Activated B cell treated with CpG ODN at 0.5 μM for 24 hours (primary cell): ENCODE measurements at regions of chr19 and their contacts with region 1.

Region 1: DNA sequence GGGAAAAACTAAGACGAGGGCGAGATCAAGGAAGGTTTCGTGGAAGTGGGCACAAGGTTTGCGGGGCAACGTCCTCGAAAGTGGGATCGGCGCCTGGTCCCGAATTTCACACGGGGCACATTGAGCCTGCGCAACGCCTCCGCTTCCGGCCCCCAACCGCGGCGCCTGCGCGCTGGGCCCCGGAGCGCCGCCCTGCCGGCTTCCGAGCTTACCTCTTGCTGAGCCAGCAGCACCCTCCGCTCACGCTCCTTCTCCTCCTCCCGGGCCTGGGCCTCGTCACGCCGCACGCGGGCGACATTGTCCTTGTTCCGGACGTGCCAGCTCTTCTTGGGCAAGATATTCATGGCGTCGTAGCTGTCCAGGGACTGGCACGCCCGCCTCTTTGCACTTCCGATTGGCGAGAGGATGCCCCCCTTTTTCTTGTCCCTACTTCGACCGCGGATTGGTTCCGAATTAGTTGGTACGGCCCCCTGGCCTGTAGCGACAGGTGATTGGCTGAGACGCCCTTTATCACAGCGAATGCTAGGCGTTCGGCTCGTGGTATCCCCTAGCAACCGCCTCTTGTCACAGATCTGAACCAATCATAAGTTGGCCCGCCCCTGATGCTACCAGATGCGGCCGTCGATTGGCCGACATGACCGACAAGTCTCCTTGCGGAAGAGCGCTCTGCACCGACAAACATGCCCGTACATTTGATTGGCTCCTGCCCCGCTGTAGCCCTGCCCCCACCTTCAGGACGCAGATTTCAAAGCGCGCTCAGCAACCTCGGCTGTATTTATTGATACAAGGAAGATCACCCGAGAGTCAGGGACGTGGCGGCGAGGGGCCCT is at the start of gene LENG1:
- DNase-seq: peak; percentile 84
- ATAC-seq: peak; percentile 85
- H3K4me3 Mint-ChIP-seq: peak within 1 kb of the TSS; percentile 100
- H3K27ac Mint-ChIP-seq: peak within 1 kb of the TSS; percentile 99
- H3K4me1 Mint-ChIP-seq: peaks cover 51% of the 10 kb centered on the region
- H3K27me3 Mint-ChIP-seq: peaks cover 8% of the 10 kb centered on the region
- CTCF ChIP-seq: no peak
- total RNA-seq, gene LENG1: 8.3 and 8.4 TPM in 2 replicates

Region 2: DNA sequence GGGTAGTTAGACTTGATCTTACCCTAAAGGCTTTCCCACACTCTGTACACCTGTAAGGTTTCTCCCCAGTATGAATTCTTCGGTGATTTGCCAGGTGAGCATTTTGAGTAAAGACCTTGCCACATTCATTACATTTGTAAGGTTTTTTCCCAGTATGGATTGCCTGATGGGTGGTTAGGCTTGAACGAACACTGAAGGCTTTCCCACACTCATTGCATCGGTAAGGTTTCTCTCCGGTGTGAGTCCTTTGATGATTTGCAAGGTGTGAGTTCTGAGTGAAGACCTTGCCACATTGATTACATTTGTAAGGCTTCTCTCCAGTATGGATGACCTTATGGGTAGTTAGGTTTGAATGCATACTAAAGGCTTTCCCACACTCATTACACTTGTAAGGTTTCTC is 1091.4 kb before region 1 on chr19:
- CTCF ChIA-PET with region 1: no interaction called
- POLR2A ChIA-PET with region 1: no interaction called
- intact Hi-C with region 1: no loop called
- DNase-seq: no peak
- ATAC-seq: no peak
- H3K4me3 Mint-ChIP-seq: no peak overlapping the region
- H3K27ac Mint-ChIP-seq: no peak overlapping the region
- H3K4me1 Mint-ChIP-seq: no peaks in the 10 kb centered on the region
- H3K27me3 Mint-ChIP-seq: no peaks in the 10 kb centered on the region
- CTCF ChIP-seq: no peak

Region 3: DNA sequence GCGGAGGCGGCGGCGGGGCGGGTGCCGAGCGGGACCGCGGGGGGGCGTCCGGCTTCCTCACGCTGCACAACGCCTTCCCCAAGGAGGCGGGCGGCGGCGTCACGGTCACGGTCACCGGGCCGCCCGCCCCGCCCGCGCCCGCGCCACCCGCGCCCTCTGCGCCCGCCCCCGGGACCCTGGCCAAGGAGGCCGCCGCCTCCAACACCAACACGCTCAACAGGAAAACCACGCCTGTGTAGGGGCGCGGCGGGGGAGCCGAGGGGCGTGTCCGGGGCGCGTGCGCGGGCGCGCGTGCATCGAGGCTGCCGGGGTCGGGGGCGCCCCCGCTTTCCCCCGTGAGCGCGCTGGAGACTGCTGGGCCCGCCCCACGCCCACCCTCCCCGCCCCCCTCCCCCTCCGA is 177.0 kb before region 1 on chr19:
- CTCF ChIA-PET with region 1: no interaction called
- POLR2A ChIA-PET with region 1: no interaction called
- intact Hi-C with region 1: no loop called
- DNase-seq: no peak
- ATAC-seq: no peak
- H3K4me3 Mint-ChIP-seq: no peak overlapping the region
- H3K27ac Mint-ChIP-seq: no peak overlapping the region
- H3K4me1 Mint-ChIP-seq: peaks cover 9% of the 10 kb centered on the region
- H3K27me3 Mint-ChIP-seq: peaks cover 32% of the 10 kb centered on the region
- CTCF ChIP-seq: no peak

Region 4: DNA sequence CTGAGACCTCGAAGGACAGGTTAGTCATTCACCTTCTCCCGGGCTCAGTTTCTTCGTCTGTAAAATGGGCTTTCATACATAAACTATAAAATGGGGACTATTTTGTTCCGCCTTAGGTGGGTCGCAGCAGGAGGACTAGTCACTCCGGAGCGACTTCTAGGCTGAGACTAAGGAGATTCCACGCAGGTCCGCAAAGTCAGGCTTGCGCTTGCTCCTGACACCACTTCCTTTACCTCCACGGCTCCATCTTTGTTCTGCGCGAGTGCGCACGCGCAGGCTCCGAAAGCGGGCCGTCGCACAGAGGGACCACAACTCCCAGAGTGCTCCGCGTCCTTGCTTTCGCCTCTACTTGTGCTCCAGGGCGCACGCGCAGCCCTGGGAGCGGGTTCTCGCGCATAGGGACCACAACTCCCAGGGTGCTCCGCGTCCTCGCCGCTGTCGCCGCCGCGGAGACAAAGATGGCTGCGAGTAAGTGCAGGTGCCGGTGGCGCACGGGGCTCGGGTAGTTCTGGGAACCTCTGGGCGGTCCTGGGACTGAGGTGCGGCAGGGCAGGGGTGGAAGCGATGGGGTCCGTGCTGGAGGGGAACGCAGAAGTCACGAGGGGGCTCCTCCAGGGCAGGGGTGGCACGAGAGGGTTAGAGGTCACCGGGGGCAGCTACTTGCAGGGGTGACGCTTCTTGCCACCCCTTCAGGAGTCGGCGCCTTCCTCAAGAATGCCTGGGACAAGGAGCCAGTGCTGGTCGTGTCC is 57.0 kb before region 1 on chr19 and contains the start of gene NDUFA3:
- CTCF ChIA-PET with region 1: no interaction called
- POLR2A ChIA-PET with region 1: interaction called, 7 read pairs
- intact Hi-C with region 1: loop called (anchors 2 kb)
- DNase-seq: peak; percentile 93
- ATAC-seq: peak; percentile 97
- H3K4me3 Mint-ChIP-seq: peak within 1 kb of the TSS; percentile 99
- H3K27ac Mint-ChIP-seq: peak within 1 kb of the TSS; percentile 93
- H3K4me1 Mint-ChIP-seq: peaks cover 15% of the 10 kb centered on the region
- H3K27me3 Mint-ChIP-seq: no peaks in the 10 kb centered on the region
- CTCF ChIP-seq: no peak
- total RNA-seq, gene NDUFA3: 94.7 and 96.1 TPM in 2 replicates

Region 5: DNA sequence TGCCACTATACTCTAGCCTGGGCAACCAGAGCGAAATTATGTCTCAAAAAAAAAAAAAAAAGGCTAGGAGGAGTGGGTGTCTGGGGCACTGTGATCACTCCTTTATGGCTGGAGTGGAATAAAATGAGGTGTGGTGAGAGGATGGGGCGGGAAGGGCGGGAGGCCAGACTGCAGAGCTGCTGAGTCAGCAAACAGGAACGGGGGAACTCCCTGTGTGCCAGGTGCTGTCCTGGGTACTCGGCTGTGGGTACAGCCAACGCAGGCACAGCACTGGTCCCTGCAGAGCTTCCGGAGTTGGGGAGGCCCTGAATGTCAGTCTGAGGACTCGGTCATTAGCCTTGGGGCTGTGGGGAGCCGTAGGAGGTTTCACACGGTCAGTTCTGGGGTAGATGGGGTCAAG is 38.3 kb before region 1 on chr19:
- CTCF ChIA-PET with region 1: no interaction called
- POLR2A ChIA-PET with region 1: no interaction called
- intact Hi-C with region 1: no loop called
- DNase-seq: no peak
- ATAC-seq: no peak
- H3K4me3 Mint-ChIP-seq: no peak overlapping the region
- H3K27ac Mint-ChIP-seq: no peak overlapping the region
- H3K4me1 Mint-ChIP-seq: peaks cover 14% of the 10 kb centered on the region
- H3K27me3 Mint-ChIP-seq: no peaks in the 10 kb centered on the region
- CTCF ChIP-seq: no peak

Region 6: DNA sequence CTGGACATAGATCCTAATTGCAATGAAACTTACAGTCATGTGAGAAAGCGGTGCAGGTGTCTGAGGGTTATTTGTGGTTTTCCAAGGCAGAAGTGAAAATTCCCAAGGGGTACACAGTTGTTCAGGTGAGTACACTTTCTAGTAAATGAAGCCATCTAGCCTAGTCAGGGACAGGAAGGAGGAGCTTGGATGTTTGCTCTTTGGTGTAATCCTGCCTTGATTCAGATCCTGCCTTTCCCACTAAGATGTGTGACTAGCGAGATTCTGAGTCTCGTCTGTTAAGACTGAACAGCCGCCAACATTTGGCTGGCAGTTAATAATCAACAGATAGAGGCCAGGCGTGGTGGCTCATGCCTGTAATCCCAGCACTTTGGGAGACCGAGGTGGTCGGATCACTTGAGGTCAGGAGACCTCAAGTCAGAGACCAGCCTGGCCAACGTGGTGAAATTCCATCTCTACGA is 43.6 kb after region 1 on chr19:
- CTCF ChIA-PET with region 1: no interaction called
- POLR2A ChIA-PET with region 1: interaction called, 19 read pairs
- intact Hi-C with region 1: loop called (anchors 1 kb)
- DNase-seq: no peak
- ATAC-seq: no peak
- H3K4me3 Mint-ChIP-seq: peak overlapping the region; percentile 100
- H3K27ac Mint-ChIP-seq: peak overlapping the region; percentile 24
- H3K4me1 Mint-ChIP-seq: peaks cover 82% of the 10 kb centered on the region
- H3K27me3 Mint-ChIP-seq: no peaks in the 10 kb centered on the region
- CTCF ChIP-seq: no peak

Region 7: GRCh38 chr19:54297760-54298305 is 138.3 kb after region 1 on chr19:
- CTCF ChIA-PET with region 1: no interaction called
- POLR2A ChIA-PET with region 1: no interaction called
- intact Hi-C with region 1: loop called (anchors 10 kb)
- DNase-seq: no peak
- ATAC-seq: peak; percentile 68
- H3K4me3 Mint-ChIP-seq: no peak overlapping the region
- H3K27ac Mint-ChIP-seq: no peak overlapping the region
- H3K4me1 Mint-ChIP-seq: peaks cover 11% of the 10 kb centered on the region
- H3K27me3 Mint-ChIP-seq: peaks cover 46% of the 10 kb centered on the region
- CTCF ChIP-seq: no peak